Heart left ventricle (tissue), 16 donors: ENCODE measurements at regions of chr11 and their contacts with region 1.

Region 1: DNA sequence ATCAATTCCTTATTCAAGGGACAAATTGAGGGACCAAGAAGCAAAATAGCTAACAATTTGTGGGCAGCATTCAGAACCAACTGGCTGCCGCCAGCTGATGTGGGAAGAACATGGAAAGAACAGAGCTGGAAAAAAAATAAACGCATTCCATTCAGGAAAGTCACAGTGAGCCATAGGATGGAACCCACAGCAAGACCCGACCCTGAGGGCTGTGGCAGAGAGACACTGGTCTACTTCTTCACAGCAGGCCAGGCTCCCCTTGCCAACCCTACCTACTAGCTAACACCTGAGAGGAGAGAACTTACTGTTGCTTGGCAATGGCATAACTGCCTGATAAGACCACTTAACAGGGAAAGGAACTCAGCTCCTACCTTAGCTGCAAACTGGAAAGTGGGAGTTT is 123.5 kb upstream of the APOA1 start:
- DNase-seq: no peak
- ATAC-seq: peak in 3 of 4 donors; percentile 11 to 45 (median 45)
- H3K4me3 ChIP-seq: no peak overlapping the region
- H3K27ac ChIP-seq: no peak overlapping the region
- H3K4me1 ChIP-seq: peaks cover 0 to 61% (median 23%) of the 10 kb centered on the region in 12 donors
- H3K27me3 ChIP-seq: no peaks in the 10 kb centered on the region
- CTCF ChIP-seq: no peak
- POLR2A ChIP-seq: no peak

Region 2: DNA sequence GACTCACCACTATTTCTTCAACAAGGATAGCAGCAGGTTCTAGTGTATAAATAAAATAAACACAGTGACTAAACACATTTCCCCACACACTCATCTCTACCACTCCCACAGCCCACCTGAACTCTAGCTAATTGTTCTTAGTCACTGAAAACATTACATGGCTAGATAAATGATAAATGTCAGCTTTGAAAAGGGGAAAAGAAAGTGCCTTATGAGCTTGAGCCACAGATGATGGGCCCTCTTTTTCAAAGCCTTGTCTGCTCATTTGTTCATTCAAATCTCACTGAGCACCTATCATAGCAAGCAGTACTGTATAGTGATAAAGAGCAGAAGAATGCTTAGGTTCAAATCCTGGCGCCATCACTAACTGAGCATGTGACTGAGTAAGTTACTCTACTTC is 79.0 kb after region 1 on chr11:
- intact Hi-C with region 1: loop called in 1 of 10 experiments (anchors 2 kb)
- DNase-seq: no peak
- ATAC-seq: no peak
- H3K4me3 ChIP-seq: no peak overlapping the region
- H3K27ac ChIP-seq: no peak overlapping the region
- H3K4me1 ChIP-seq: peaks cover 3 to 58% (median 45%) of the 10 kb centered on the region in 12 donors
- H3K27me3 ChIP-seq: no peaks in the 10 kb centered on the region
- CTCF ChIP-seq: no peak
- POLR2A ChIP-seq: no peak

Region 3: GRCh38 chr11:117127171-117127901 is 166.4 kb after region 1 on chr11:
- intact Hi-C with region 1: no loop called
- DNase-seq: no peak
- ATAC-seq: no peak
- H3K4me3 ChIP-seq: no peak overlapping the region
- H3K27ac ChIP-seq: no peak overlapping the region
- H3K4me1 ChIP-seq: no peaks in the 10 kb centered on the region
- H3K27me3 ChIP-seq: no peaks in the 10 kb centered on the region
- CTCF ChIP-seq: no peak
- POLR2A ChIP-seq: no peak